ENCODE measurements at regions of chr1 and their contacts with region 1.

Region 1: GRCh38 chr1:53754484-53755312 is 15.7 kb upstream of the GLIS1 start:
- DNase-seq: peak in 1 of 2 donors; percentile 32
- ATAC-seq: peak; percentile 60

Region 2: GRCh38 chr1:53485478-53486394 is 269.0 kb before region 1 on chr1:
- intact Hi-C with region 1: loop called (anchors 1 to 5 kb)
- DNase-seq: peak in 1 of 2 donors; percentile 85
- ATAC-seq: peak; percentile 78

Region 3: GRCh38 chr1:53896635-53897229 is 142.0 kb after region 1 on chr1:
- intact Hi-C with region 1: no loop called
- DNase-seq: no peak
- ATAC-seq: peak; percentile 86

Measured in left colon (tissue), 2 donors.